ENCODE measurements at regions of chr3 and their contacts with region 1.

Region 1: GRCh38 chr3:49445381-49445780 is 16.3 kb upstream of the NICN1 start:
- DNase-seq: no peak
- ATAC-seq: no peak

Region 2: GRCh38 chr3:48989796-48990635 is 455.4 kb before region 1 on chr3 and contains the start of gene P4HTM:
- intact Hi-C with region 1: loop called (anchors 5 kb)
- DNase-seq: peak; percentile 93
- ATAC-seq: peak; percentile 90
- total RNA-seq, gene P4HTM: 25.5 TPM

Region 3: GRCh38 chr3:49295489-49296058 is 149.8 kb before region 1 on chr3:
- intact Hi-C with region 1: loop called (anchors 5 kb)
- DNase-seq: peak; percentile 73
- ATAC-seq: no peak